Right ventricle myocardium inferior (tissue), 1 donor: ENCODE measurements at regions of chr5 and their contacts with region 1.

Region 1: DNA sequence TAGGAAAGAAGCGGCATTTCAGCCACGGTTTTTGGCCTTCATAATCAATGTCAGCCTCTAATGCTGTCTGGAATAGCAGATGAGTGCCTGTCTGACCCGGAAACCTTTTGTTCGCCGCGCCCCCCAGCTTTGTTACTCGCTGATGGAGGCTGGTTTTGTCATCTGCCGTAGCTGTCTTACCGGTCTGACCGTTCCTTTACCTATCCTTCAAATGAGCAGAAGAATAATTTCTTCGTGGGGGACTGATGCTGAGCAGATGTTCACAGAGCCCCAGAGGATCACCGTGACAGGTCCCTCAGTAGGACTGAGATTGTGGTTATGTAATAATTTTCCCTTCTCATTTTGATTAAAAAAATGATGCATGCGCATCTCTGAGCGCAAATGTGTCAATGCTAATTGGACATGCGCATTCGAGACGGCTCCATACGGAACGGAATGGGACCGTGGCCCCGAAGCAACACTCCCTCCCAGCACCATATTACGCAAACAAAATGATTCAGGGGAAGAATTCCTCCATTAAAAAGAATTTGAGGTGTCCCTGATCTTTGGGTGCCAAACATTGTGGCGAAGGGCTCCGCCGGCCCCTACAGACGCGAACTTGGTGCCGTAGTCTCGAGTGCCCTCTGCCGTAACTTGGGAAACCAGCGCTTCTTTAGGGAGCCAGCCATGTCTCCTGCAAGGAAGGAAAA is 27.6 kb downstream of the TLX3 start:
- DNase-seq: no peak
- ATAC-seq: peak; percentile 69

Region 2: GRCh38 chr5:170747851-170748250 is 588.8 kb before region 1 on chr5:
- intact Hi-C with region 1: loop called (anchors 10 kb)
- DNase-seq: no peak
- ATAC-seq: peak; percentile 5

Region 3: GRCh38 chr5:171379961-171380360 is 43.3 kb after region 1 on chr5:
- intact Hi-C with region 1: no loop called
- DNase-seq: no peak
- ATAC-seq: no peak